Activated T-helper 2 cell treated with anti-CD3 and anti-CD28 coated beads, Interferon-gamma antibody, Interleukin-2, Interleukin-4, amounts not matched to agents 10 μg/mL and 5 μg/mL and 100 μg/mL, durations not matched to agents 14 hours and 24 hours and 36 hours (primary cell): ENCODE measurements at regions of chr1 and their contacts with region 1.

Region 1: DNA sequence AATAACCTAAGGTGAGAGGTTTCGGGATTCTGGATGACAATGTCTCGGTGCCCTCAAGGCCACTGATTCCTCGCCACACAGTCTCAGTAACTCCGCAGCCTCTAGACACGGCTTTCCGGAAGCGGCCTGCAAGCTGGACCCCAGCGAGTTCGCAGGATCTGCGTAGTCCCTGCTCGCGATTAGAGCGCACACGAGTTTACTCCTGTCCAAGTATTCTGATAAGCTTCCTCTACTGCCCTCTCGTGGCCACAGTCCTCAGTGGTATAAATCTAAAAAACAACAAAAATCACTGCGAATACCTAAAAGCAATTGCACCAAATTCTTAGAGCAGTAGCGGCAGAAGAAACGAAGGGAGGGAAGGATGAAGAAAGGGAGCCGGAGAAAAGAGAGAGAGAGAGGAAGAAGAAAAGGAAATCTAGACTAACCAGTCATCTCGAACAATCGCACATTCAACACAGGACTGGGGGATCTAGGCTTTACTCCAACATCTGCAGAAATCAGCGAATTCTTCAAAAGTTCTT is 1.1 kb upstream of the PLXNA2 start:
- DNase-seq: peak; percentile 59
- H3K4me3 Mint-ChIP-seq: peak overlapping the region; percentile 52
- H3K27ac Mint-ChIP-seq: no peak overlapping the region
- H3K4me1 Mint-ChIP-seq: peaks cover 9% of the 10 kb centered on the region
- H3K27me3 Mint-ChIP-seq: peaks cover 36% of the 10 kb centered on the region

Region 2: GRCh38 chr1:208025031-208025430 is 220.2 kb before region 1 on chr1:
- intact Hi-C with region 1: loop called (anchors 1 kb)
- DNase-seq: no peak
- H3K4me3 Mint-ChIP-seq: no peak overlapping the region
- H3K27ac Mint-ChIP-seq: no peak overlapping the region
- H3K4me1 Mint-ChIP-seq: no peaks in the 10 kb centered on the region
- H3K27me3 Mint-ChIP-seq: peaks cover 3% of the 10 kb centered on the region

Region 3: DNA sequence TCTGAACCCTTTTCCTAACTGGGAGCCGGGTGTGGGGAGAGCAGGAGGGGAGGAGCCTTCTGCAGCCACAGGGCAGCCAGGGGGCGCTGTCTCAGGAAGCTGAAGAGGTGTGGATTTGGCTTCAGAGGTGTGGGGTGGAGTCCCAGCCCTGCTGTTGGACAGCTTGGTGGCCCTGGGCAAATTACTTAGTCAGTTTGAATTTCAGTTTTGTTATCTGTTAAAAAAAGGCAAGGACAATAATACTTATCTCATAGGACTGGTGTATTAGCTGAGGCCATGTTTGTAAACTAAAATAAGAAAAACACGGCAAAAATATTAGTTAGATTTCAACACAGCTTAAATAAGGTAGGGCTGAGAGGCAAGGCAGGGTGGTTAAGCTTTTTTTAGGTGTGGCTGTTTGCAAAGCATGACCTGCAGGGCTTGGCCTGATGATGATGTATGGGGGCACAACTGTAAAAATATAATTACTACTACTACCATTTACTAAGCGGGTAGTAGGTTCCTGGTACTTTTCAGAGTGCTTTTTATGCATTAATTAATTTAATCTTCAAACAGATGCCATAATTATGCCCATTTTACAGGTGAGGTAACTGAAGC is 112.9 kb before region 1 on chr1:
- intact Hi-C with region 1: loop called (anchors 2 kb)
- DNase-seq: peak; percentile 36
- H3K4me3 Mint-ChIP-seq: no peak overlapping the region
- H3K27ac Mint-ChIP-seq: no peak overlapping the region
- H3K4me1 Mint-ChIP-seq: no peaks in the 10 kb centered on the region
- H3K27me3 Mint-ChIP-seq: peaks cover 28% of the 10 kb centered on the region

Region 4: GRCh38 chr1:208485512-208485911 is 240.3 kb after region 1 on chr1:
- intact Hi-C with region 1: no loop called
- DNase-seq: no peak
- H3K4me3 Mint-ChIP-seq: no peak overlapping the region
- H3K27ac Mint-ChIP-seq: no peak overlapping the region
- H3K4me1 Mint-ChIP-seq: no peaks in the 10 kb centered on the region
- H3K27me3 Mint-ChIP-seq: no peaks in the 10 kb centered on the region